ENCODE measurements at regions of chr15 and their contacts with region 1.

Region 1: GRCh38 chr15:51341366-51342226 is at the start of gene GLDN:
- DNase-seq: peak; percentile 84 to 91
- ATAC-seq: peak; percentile 90
- H3K4me3 ChIP-seq: peak within 1 kb of the TSS; percentile 43 to 66
- H3K27ac ChIP-seq: peak within 1 kb of the TSS; percentile 68 to 79
- H3K4me1 ChIP-seq: no peaks in the 10 kb centered on the region
- H3K27me3 ChIP-seq: no peaks in the 10 kb centered on the region
- total RNA-seq, gene GLDN: 23.0 to 49.2 TPM

Region 2: DNA sequence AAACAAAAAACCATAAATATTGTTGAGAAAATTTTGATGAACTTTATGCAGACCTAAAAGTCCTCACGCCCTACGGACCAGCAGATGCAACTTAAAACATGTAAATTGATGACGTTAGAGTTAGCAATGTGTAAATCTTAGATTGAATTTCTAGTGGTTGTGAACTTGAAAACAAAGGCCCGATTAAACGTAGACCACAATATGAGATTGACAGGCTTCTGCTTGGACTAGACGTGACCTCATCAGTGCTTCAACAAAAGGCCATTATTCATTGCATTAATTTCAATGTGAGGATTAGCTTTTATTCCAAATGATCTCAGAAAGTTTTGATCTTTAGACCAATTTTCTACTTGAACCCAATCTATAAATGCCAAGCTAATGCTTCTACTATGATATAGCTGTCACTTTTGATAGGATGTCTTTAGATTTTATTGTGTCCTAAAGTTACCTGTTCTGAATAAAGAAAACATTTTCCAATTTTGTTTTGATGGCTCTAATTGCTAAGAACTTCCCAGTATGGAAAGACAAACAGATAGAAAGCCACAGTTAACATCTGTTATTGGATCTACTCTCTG is 520.7 kb before region 1 on chr15:
- intact Hi-C with region 1: no loop called
- DNase-seq: no peak
- ATAC-seq: no peak
- H3K4me3 ChIP-seq: no peak overlapping the region
- H3K27ac ChIP-seq: no peak overlapping the region
- H3K4me1 ChIP-seq: no peaks in the 10 kb centered on the region
- H3K27me3 ChIP-seq: no peaks in the 10 kb centered on the region

Region 3: DNA sequence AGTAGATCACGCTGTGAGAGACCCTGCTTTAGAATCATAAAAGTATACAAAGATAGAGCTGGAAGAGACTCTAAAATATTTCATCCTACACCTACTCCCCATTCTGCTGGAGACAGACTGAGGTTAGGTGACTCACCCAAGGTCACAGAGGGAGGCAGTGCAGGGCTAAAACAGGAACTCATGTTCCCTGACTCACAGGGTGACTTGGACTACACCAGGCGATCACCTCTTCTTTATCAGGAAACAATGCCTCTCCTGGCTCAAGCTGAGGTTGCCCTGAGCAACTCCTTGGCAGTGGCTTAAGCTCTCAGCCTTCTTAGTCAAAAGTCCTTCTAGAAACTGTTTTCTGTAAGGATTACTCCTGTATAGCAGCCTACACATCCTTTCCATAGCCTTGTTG is 220.5 kb before region 1 on chr15:
- intact Hi-C with region 1: no loop called
- DNase-seq: peak; percentile 80 to 86
- ATAC-seq: peak; percentile 86
- H3K4me3 ChIP-seq: no peak overlapping the region
- H3K27ac ChIP-seq: peak overlapping the region in 1 of 2 donors; percentile 8
- H3K4me1 ChIP-seq: peaks cover 1 to 7% of the 10 kb centered on the region in 2 donors
- H3K27me3 ChIP-seq: no peaks in the 10 kb centered on the region

Region 4: DNA sequence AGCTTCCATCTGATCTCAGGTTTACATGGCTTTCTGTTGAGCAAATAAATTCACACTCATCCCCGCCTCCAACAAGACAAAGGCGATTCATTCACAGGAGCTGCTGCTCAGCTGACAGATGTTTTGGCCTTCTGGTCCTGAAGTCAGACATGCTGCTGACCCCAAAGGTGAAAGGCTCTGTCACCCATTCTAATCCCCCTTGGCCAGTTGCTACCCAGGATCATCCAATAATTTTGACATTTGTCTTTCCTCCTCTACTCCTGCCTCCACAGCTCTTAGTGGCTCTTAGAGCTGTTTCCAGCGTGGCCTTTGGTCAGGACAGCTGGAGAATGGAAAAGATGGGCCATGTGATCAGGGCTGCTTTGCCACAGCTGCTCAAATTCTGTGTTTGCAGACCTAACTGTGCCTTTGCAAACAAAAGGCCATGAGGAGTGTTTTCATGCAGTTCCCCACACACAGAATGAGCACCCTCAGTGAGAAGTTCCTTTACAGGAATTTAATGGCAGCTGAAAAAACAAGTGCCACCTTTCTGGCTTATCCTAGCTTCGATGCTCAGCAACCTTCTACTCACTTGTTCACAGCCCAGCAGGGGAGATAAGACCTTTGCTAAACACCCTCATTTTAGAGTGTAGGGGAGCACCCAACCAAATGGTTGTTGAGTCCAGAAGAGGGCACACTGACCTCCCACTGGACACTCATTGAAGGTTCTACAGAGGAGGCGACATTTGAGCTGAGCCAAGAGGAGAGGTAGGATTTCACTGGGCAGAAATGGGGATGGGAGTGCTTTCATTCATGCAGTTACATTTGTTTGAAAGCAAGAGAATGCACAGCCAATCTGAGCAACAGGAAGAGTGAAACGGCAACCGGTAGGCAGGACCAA is 42.2 kb before region 1 on chr15:
- intact Hi-C with region 1: loop called in 1 of 2 experiments (anchors 5 kb)
- DNase-seq: no peak
- ATAC-seq: no peak
- H3K4me3 ChIP-seq: no peak overlapping the region
- H3K27ac ChIP-seq: no peak overlapping the region
- H3K4me1 ChIP-seq: no peaks in the 10 kb centered on the region
- H3K27me3 ChIP-seq: no peaks in the 10 kb centered on the region

Region 5: DNA sequence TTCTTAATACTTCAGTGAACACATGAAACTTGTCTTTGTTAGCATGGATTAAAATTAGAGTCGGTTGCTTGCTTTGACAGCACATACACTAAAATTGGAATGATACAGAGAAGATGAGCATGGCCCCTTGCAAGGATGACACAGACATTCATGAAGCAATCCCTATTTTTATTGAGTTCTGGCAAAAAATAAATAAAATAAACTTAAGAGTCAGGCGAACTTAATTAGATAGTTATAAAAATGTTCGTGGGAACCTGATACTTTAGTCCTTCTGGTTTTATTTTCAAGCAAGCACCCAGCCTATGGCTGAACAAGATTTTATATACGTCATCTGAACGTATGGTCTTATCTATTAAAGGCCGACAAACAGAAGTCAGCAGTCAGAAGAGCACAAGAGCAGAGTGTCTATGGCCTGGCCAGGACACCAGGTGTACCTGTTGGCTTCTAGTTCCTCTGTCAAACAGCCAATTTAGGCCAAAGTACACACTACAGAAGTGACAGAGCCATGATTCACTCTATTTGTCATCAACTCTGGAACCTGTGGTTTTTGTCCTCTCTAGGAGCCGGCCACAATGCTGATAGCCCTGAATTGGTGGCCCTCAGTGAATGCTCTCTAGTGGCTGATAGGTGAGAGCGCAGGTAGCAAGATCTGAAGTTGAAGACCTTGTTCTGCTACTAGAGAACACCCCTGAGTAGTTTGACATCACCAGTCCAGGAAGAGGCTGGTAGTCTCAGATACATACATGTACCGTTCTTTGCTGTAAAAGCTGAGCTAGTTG is 565.7 kb after region 1 on chr15:
- intact Hi-C with region 1: no loop called
- DNase-seq: no peak
- ATAC-seq: no peak
- H3K4me3 ChIP-seq: no peak overlapping the region
- H3K27ac ChIP-seq: no peak overlapping the region
- H3K4me1 ChIP-seq: no peaks in the 10 kb centered on the region
- H3K27me3 ChIP-seq: no peaks in the 10 kb centered on the region